Psoas muscle (tissue), 8 donors: ENCODE measurements at regions of chr4 and their contacts with region 1.

Region 1: GRCh38 chr4:75989846-75990528 is 758 bp downstream of the SDAD1 start:
- DNase-seq: no peak
- ATAC-seq: peak in 2 of 4 donors; percentile 51 to 68
- H3K4me3 ChIP-seq: peak overlapping the region; percentile 98
- H3K27ac ChIP-seq: peak overlapping the region; percentile 89
- H3K4me1 ChIP-seq: peaks cover 23% of the 10 kb centered on the region
- H3K27me3 ChIP-seq: no peaks in the 10 kb centered on the region
- CTCF ChIP-seq: no peak

Region 2: GRCh38 chr4:75686346-75686745 is 303.6 kb before region 1 on chr4:
- intact Hi-C with region 1: no loop called
- DNase-seq: no peak
- ATAC-seq: peak; percentile 46 to 70 (median 62)
- H3K4me3 ChIP-seq: no peak overlapping the region
- H3K27ac ChIP-seq: peak overlapping the region; percentile 82
- H3K4me1 ChIP-seq: peaks cover 11% of the 10 kb centered on the region
- H3K27me3 ChIP-seq: no peaks in the 10 kb centered on the region
- CTCF ChIP-seq: no peak

Region 3: GRCh38 chr4:75724066-75724866 is 265.7 kb before region 1 on chr4 and contains the start of gene USO1:
- intact Hi-C with region 1: no loop called
- DNase-seq: peak; percentile 98 to 99
- ATAC-seq: peak; percentile 83 to 93 (median 90)
- H3K4me3 ChIP-seq: peak within 1 kb of the TSS; percentile 92
- H3K27ac ChIP-seq: peak within 1 kb of the TSS; percentile 99
- H3K4me1 ChIP-seq: peaks cover 39% of the 10 kb centered on the region
- H3K27me3 ChIP-seq: no peaks in the 10 kb centered on the region
- CTCF ChIP-seq: peak; percentile 70
- total RNA-seq, gene USO1: 175 to 210 (median 180) TPM

Region 4: GRCh38 chr4:75844151-75844662 is 145.8 kb before region 1 on chr4:
- intact Hi-C with region 1: no loop called
- DNase-seq: no peak
- ATAC-seq: no peak
- H3K4me3 ChIP-seq: no peak overlapping the region
- H3K27ac ChIP-seq: no peak overlapping the region
- H3K4me1 ChIP-seq: peaks cover 10% of the 10 kb centered on the region
- H3K27me3 ChIP-seq: no peaks in the 10 kb centered on the region
- CTCF ChIP-seq: no peak

Region 5: GRCh38 chr4:75930152-75930551 is 59.8 kb before region 1 on chr4:
- intact Hi-C with region 1: no loop called
- DNase-seq: no peak
- ATAC-seq: no peak
- H3K4me3 ChIP-seq: no peak overlapping the region
- H3K27ac ChIP-seq: no peak overlapping the region
- H3K4me1 ChIP-seq: no peaks in the 10 kb centered on the region
- H3K27me3 ChIP-seq: no peaks in the 10 kb centered on the region
- CTCF ChIP-seq: no peak

Region 6: GRCh38 chr4:76087007-76087769 is 97.2 kb after region 1 on chr4:
- intact Hi-C with region 1: loop called (anchors 1 to 5 kb)
- DNase-seq: peak; percentile 25 to 58
- ATAC-seq: peak; percentile 75 to 77 (median 76)
- H3K4me3 ChIP-seq: peak overlapping the region; percentile 54
- H3K27ac ChIP-seq: peak overlapping the region; percentile 86
- H3K4me1 ChIP-seq: peaks cover 79% of the 10 kb centered on the region
- H3K27me3 ChIP-seq: no peaks in the 10 kb centered on the region
- CTCF ChIP-seq: peak; percentile 66

Region 7: DNA sequence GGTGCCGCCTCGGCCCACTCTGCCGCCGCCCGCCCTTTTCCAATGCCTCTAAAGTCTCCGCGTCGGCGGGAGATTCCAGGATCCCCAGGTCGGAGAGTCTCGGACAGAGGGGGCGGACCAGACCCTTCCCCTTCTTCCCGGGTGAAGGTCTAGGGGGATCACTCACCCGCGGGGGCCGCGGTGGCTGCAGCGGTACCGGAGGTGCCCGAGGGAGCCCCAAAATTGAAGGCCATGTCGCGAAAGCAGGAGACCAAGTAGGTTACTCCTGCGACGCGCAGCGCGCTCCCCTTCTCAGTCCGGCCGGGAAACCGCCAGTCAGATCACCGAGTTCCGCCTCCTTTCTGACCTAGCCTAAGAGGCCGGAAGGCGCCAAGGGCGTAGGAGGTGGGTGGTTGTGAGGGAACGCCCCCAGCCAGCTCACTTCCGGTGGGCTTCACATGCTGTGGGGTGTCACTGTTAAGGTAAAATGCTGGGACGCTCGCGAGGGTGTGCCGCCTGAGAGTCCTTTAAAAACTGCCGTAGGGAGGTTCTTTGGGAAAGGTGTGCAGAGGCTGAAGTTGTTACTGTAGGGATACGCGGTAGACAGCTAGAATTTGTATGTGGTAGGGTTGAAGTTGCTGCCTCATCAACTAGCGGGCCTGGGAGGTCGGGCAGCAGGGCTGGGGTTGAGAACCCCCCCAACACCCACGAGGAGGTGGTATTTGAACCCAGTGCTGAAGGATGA is 158.3 kb after region 1 on chr4 and contains the start of gene NUP54:
- intact Hi-C with region 1: loop called in 1 of 2 experiments (anchors 2 kb)
- DNase-seq: peak; percentile 93 to 97
- ATAC-seq: peak; percentile 99
- H3K4me3 ChIP-seq: peak within 1 kb of the TSS; percentile 89
- H3K27ac ChIP-seq: peak within 1 kb of the TSS; percentile 91
- H3K4me1 ChIP-seq: peaks cover 24% of the 10 kb centered on the region
- H3K27me3 ChIP-seq: no peaks in the 10 kb centered on the region
- CTCF ChIP-seq: no peak
- total RNA-seq, gene NUP54: 14.1 to 25.9 (median 17.6) TPM